Pancreas (tissue), 10 donors: ENCODE measurements at regions of chr5 and their contacts with region 1.

Region 1: DNA sequence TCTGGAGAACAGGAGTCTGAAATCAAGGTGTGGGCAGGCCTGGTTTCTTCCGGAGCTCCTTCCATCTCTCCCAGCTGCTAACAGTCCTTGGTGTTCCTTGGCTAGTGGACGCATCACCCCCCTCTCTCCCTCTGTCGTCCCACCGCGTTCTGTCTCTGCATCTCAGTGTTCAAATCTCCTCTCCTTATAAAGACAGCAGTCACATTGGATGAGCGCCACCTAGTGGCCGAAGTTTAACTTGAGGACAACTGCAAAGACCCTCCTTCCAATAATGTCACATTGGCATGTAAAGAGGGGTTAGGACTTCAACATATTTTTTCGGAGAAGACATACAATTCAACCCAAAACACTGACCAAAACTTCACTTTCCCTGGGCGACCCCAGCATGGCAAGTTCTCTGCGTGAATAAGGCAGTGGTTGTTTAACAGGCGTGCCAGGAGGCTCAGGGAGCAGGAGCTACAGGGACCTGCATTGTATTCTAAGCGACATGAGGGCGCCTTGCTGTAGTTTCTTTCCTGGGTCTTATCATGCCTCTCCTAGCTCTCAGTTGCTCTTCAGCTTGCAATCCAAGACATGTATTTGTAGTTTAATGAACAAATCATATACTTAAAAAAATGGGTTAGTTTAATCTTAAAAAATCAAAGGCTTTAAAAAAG is 27.9 kb upstream of the BASP1 start:
- DNase-seq: peak; percentile 36 to 91 (median 72)
- ATAC-seq: peak; percentile 71 to 83 (median 82)
- H3K4me3 ChIP-seq: no peak overlapping the region
- H3K27ac ChIP-seq: no peak overlapping the region
- H3K4me1 ChIP-seq: peaks cover 0 to 6% (median 0%) of the 10 kb centered on the region in 3 donors
- H3K27me3 ChIP-seq: no peaks in the 10 kb centered on the region
- CTCF ChIP-seq: peak; percentile 70 to 85 (median 82)

Region 2: DNA sequence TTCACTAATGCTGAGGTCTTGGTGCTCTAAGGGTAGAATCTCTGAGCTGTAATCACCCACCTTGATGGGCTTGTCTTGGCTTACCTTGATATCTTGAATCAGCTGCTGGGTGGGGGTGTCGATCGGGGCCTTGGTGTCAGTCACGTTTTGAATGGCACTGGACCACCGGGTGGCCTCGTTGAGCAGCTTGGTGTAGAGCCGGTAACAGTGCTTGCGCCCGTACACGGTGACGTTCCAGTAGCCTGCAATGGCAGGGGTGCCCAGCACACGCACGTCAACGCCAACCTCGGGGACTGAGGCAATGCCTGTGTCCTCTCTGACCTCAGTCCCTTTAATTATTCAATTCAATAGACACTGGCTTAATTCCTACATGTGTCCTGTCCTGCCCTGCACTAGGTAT is 509.6 kb before region 1 on chr5:
- intact Hi-C with region 1: loop called in 1 of 3 experiments (anchors 10 kb)
- DNase-seq: no peak
- ATAC-seq: no peak
- H3K4me3 ChIP-seq: no peak overlapping the region
- H3K27ac ChIP-seq: no peak overlapping the region
- H3K4me1 ChIP-seq: peaks cover 0 to 3% (median 0%) of the 10 kb centered on the region in 3 donors
- H3K27me3 ChIP-seq: no peaks in the 10 kb centered on the region
- CTCF ChIP-seq: no peak

Region 3: DNA sequence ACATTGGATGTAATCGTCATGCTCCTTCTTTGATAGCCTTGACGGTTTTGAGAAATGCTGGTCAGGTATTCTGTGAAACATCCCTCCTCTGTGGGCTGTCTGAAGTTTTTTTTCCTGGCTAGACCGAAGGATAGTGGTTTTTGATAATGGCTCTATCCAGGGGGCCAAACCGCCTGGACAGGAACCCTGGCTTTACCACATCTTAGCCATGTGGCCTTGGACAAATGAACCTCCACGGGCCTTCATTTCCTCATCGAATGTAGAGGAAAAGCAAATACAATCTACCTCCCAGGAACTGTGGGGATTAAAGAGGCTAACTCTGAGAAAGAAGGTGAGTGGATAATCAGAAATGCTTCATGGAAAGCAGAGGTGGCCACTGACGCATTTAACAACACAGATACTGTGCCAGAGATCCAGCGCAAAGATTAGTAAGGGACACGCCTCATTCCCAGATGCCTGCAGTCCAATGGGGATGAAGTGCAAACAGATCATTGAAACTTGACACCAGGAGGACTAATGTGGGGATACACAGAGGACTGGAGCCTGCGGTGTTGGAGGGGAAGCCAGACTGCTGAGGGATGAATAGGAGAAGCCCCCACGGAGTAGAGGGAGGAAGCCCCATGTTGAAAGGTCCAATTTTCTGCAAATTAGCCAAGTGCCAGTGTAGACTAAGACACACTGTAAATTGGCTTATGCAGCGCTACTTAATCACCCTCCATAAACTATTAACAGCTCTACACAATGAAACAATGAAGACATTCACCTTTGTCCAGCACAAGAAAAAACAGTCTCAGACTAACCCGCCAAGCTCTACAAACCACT is 295.1 kb before region 1 on chr5:
- intact Hi-C with region 1: no loop called
- DNase-seq: peak in 3 of 6 donors; percentile 53 to 62 (median 60)
- ATAC-seq: peak; percentile 66 to 80 (median 78)
- H3K4me3 ChIP-seq: no peak overlapping the region
- H3K27ac ChIP-seq: peak overlapping the region; percentile 71 to 82 (median 76)
- H3K4me1 ChIP-seq: peaks cover 46 to 56% (median 52%) of the 10 kb centered on the region in 3 donors
- H3K27me3 ChIP-seq: no peaks in the 10 kb centered on the region
- CTCF ChIP-seq: no peak

Region 4: GRCh38 chr5:17482790-17483189 is 293.3 kb after region 1 on chr5:
- intact Hi-C with region 1: no loop called
- DNase-seq: no peak
- ATAC-seq: no peak
- H3K4me3 ChIP-seq: no peak overlapping the region
- H3K27ac ChIP-seq: no peak overlapping the region
- H3K4me1 ChIP-seq: no peaks in the 10 kb centered on the region
- H3K27me3 ChIP-seq: peaks cover 0 to 9% (median 0%) of the 10 kb centered on the region in 4 donors
- CTCF ChIP-seq: no peak